PC-3 (cell line): ENCODE measurements at regions of chr10 and their contacts with region 1.

Region 1: DNA sequence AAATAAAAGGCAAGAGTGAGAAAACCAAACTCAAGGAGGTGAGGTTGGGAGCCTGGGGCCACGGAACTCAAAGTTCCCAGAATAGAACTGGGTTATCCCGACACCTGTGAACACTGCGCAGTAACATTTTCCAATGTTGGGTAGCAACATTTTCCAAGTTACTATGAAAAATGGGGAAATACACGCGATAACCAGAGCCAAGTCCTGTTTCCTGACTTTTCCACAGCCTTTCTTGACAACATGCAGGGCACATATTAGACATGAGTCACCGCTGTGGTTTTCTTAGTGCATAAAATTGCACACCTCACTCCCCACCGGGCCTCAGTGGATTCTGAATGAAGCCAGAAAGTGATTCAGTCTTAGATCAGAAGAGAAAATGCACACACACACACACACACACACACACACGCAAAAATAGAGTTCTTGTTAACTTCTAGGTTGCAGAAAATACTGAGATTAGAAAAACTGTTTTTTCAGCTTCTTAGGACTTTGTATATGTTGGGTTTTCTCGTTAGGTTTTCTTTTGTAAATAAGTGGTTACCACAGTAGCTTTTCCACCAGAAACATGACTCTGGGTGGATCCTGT is 70.0 kb downstream of the CAMK1D start:
- DNase-seq: peak; percentile 88
- ATAC-seq: peak; percentile 96
- H3K4me3 ChIP-seq: no peak overlapping the region
- H3K27ac ChIP-seq: peak overlapping the region; percentile 92
- H3K4me1 ChIP-seq: peaks cover 17% of the 10 kb centered on the region
- H3K27me3 ChIP-seq: no peaks in the 10 kb centered on the region
- CTCF ChIP-seq: no peak

Region 2: GRCh38 chr10:12389154-12389734 is 30.1 kb before region 1 on chr10:
- CTCF ChIA-PET with region 1: no interaction called
- POLR2A ChIA-PET with region 1: no interaction called
- intact Hi-C with region 1: no loop called
- DNase-seq: no peak
- ATAC-seq: no peak
- H3K4me3 ChIP-seq: no peak overlapping the region
- H3K27ac ChIP-seq: no peak overlapping the region
- H3K4me1 ChIP-seq: peaks cover 6% of the 10 kb centered on the region
- H3K27me3 ChIP-seq: no peaks in the 10 kb centered on the region
- CTCF ChIP-seq: no peak

Region 3: GRCh38 chr10:12405342-12406320 is 13.7 kb before region 1 on chr10:
- CTCF ChIA-PET with region 1: no interaction called
- POLR2A ChIA-PET with region 1: no interaction called
- intact Hi-C with region 1: loop called (anchors 1 kb)
- DNase-seq: peak; percentile 58
- ATAC-seq: peak; percentile 84
- H3K4me3 ChIP-seq: peak overlapping the region; percentile 56
- H3K27ac ChIP-seq: peak overlapping the region; percentile 80
- H3K4me1 ChIP-seq: peaks cover 20% of the 10 kb centered on the region
- H3K27me3 ChIP-seq: no peaks in the 10 kb centered on the region
- CTCF ChIP-seq: 0 out of 2 replicates have a peak, but pooled peaks have one; percentile 16

Region 4: GRCh38 chr10:12448729-12449391 is 29.5 kb after region 1 on chr10:
- CTCF ChIA-PET with region 1: no interaction called
- POLR2A ChIA-PET with region 1: no interaction called
- intact Hi-C with region 1: loop called (anchors 1 kb)
- DNase-seq: peak; percentile 78
- ATAC-seq: peak; percentile 90
- H3K4me3 ChIP-seq: peak overlapping the region; percentile 42; the same call in 1 of the 2 replicates
- H3K27ac ChIP-seq: peak overlapping the region; percentile 82
- H3K4me1 ChIP-seq: peaks cover 11% of the 10 kb centered on the region
- H3K27me3 ChIP-seq: no peaks in the 10 kb centered on the region
- CTCF ChIP-seq: no peak

Region 5: DNA sequence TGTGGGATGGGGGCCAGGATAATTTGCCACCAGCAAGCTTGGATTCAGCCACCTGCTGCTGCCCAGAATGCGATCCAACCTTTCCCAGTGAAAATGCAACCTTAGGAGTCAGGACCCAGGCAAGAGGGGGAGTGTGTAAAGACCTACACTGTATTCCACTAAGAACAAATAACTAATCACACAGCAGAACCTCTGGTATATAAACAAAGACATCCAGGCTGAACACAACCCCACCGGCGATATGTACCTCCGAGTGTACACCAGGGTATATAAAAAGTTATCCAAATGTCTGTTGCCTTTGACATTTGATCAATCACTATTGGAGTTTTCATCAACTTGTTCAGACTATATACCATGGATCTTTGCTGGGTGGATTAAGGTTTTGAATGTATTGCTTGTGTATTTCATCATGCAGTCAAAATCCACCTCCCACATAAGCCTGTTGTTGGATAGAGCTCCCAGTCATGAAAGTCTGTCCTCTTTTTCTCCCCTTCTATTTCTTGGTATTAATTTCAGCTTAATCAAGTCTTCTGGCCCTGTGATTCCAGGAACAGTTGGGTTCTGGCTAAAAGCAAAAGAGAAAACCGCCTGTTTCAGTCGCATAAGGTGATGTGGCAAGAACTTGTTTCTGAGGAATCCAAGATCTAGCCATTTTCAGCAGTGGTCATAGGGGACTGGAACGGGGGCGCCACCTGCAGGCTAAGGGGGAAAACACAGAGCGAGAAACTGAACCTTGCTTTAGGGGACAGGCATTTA is 291.4 kb after region 1 on chr10:
- CTCF ChIA-PET with region 1: no interaction called
- POLR2A ChIA-PET with region 1: no interaction called
- intact Hi-C with region 1: loop called (anchors 1 kb)
- DNase-seq: peak; percentile 63
- ATAC-seq: peak; percentile 25
- H3K4me3 ChIP-seq: no peak overlapping the region
- H3K27ac ChIP-seq: peak overlapping the region; percentile 100; the same call in 1 of the 2 replicates
- H3K4me1 ChIP-seq: peaks cover 62% of the 10 kb centered on the region
- H3K27me3 ChIP-seq: no peaks in the 10 kb centered on the region
- CTCF ChIP-seq: peak; percentile 76